ENCODE measurements at regions of chr5 and their contacts with region 1.

Region 1: DNA sequence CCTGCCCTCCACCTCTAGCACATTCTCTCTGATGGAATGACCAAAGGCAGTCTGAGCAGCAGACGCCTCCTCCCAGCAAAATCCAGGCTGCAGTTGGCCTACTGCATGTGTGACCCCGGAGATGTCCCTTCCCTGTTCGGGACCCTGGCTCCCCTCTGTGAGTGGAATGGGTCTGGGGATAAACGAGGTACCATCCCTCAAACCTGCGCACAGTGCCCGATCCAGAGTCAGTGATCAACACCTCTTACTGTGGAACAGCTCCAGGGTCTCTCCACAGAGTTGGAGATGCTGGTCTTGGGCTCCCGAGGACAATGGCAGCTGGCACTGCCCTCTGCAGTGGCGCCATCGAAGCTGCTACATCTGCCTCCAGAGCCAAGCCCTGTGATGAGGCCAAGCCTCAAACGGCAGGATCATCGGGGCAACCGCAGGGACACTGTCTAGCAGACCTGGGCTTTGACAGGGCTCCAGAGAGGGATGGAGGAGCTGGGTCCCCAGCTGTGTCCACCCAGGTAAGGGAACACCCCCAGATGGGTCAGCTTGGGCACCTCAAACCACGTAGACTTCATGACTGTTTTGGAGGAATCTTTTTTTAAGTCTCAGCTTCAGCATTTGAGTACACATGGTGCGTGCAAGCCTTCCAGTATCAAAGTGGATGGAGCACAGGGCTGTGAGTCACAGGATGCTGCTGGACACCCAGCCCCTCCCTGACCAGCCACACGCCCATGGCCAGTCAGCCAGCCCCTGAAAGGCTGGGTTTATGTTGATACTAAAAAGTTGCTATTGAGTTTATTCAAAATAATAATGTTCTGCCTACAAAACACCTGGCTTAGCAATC is 13.0 kb downstream of the MED10 start:
- DNase-seq: no peak
- H3K4me3 ChIP-seq: no peak overlapping the region
- H3K27me3 ChIP-seq: no peaks in the 10 kb centered on the region
- CTCF ChIP-seq: no peak

Region 2: DNA sequence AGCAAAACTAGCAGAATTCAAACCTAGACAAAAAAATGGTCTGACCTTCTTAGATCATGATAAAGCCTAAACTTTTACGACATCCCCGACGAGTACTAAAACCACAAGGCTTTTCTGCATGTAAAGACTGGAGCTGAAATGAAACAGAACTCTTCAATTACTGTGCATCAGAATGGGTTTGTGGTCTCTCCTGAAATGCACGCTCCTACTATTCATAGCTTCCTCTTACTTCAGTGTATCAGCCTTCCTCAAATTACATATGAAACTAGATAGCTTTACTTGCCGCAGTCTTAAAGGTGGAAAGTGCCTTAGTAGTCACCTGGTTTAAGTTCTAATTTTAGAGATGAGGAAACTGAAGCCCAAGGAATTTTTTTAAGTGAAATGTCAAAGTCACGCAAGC is 37.6 kb after region 1 on chr5:
- CTCF ChIA-PET with region 1: no interaction called
- POLR2A ChIA-PET with region 1: interaction called, 11 read pairs
- DNase-seq: peak; percentile 21
- H3K4me3 ChIP-seq: no peak overlapping the region
- H3K27me3 ChIP-seq: no peaks in the 10 kb centered on the region
- CTCF ChIP-seq: no peak

Measured in BJ (cell line).